Activated T-helper 2 cell treated with anti-CD3 and anti-CD28 coated beads, Interferon-gamma antibody, Interleukin-2, Interleukin-4, amounts not matched to agents 10 μg/mL and 5 μg/mL and 100 μg/mL, durations not matched to agents 14 hours and 24 hours and 36 hours (primary cell): ENCODE measurements at regions of chr22 and their contacts with region 1.

Region 1: DNA sequence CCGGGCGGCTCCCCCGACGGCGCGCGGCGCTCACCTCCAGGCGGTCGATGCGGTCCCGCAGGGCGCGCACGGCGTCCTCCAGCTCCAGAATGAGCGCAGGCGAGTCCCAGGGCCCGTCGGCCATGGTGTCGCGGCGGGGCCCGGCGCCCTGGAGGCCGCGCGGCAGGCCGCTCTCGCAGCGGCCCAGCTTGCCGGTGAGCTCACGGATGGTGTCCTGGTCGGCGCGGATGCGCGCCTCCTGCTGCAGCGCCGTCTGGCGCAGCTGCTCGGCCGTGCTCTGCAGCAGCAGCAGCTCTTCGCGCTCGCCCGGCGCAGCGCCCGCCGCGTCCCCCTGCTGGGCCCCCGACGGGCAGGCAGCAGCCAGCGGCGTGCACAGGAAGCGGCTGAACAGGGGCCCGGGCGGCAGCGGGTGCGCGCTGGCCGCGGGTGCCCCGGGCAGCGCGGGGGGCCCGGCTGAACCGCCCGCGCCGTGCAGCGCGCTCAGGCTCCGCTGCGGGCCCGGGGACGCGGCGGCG is 570 bp downstream of the NPTXR start:
- DNase-seq: peak; percentile 45
- H3K4me3 Mint-ChIP-seq: no peak overlapping the region
- H3K27ac Mint-ChIP-seq: no peak overlapping the region
- H3K4me1 Mint-ChIP-seq: peaks cover 7% of the 10 kb centered on the region
- H3K27me3 Mint-ChIP-seq: peaks cover 53% of the 10 kb centered on the region

Region 2: GRCh38 chr22:38766076-38766777 is 77.0 kb before region 1 on chr22:
- intact Hi-C with region 1: loop called (anchors 5 kb)
- DNase-seq: peak; percentile 25
- H3K4me3 Mint-ChIP-seq: no peak overlapping the region
- H3K27ac Mint-ChIP-seq: no peak overlapping the region
- H3K4me1 Mint-ChIP-seq: no peaks in the 10 kb centered on the region
- H3K27me3 Mint-ChIP-seq: no peaks in the 10 kb centered on the region

Region 3: GRCh38 chr22:38811241-38811640 is 32.0 kb before region 1 on chr22:
- intact Hi-C with region 1: no loop called
- DNase-seq: no peak
- H3K4me3 Mint-ChIP-seq: no peak overlapping the region
- H3K27ac Mint-ChIP-seq: no peak overlapping the region
- H3K4me1 Mint-ChIP-seq: no peaks in the 10 kb centered on the region
- H3K27me3 Mint-ChIP-seq: peaks cover 16% of the 10 kb centered on the region